Left colon (tissue), 2 donors: ENCODE measurements at regions of chr1 and their contacts with region 1.

Region 1: DNA sequence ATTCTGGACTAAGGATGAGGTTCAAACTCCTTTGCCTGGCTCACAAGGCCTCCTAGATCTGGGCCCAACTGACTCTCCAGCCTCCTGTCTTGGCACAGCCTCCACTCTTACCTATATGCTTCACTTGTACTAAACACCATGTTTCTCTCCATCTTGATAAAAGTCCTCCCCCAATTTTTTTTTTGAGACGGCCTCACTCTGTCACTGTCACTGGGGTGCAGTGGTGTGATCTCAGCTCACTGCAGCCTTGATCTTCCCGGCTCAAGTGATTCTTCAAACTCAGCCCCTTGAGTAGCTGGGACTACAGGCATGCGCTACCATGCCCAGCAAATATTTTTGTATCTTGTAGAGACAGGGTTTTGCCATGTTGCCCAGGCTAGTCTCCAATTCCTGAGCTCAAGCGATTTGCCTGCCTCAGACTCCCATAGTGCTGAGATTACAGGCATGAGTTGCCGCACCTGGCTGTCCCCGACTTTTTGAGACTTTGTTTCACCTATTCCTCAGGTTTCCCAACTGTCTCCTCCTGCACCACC is 39.7 kb downstream of the CD34 start:
- DNase-seq: no peak
- ATAC-seq: no peak

Region 2: DNA sequence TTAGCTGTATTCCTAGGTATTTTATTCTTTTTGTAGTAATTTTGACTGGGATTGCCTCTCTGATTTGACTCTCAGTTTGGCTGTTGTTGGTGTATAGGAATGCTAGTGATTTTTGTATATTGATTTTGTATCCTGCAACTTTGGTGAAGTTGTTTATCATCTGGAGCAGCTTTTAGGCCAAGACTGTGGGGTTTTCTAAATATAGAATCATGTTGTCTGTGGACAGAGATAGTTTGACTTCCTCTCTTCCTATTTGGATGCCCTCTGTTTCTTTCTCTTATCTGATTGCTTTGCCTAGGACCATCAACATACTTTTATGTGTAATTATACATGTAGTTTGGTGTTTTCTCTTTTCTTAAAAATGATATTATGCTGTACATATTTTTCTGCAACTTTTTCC is 92.2 kb before region 1 on chr1:
- intact Hi-C with region 1: no loop called
- DNase-seq: no peak
- ATAC-seq: no peak

Region 3: DNA sequence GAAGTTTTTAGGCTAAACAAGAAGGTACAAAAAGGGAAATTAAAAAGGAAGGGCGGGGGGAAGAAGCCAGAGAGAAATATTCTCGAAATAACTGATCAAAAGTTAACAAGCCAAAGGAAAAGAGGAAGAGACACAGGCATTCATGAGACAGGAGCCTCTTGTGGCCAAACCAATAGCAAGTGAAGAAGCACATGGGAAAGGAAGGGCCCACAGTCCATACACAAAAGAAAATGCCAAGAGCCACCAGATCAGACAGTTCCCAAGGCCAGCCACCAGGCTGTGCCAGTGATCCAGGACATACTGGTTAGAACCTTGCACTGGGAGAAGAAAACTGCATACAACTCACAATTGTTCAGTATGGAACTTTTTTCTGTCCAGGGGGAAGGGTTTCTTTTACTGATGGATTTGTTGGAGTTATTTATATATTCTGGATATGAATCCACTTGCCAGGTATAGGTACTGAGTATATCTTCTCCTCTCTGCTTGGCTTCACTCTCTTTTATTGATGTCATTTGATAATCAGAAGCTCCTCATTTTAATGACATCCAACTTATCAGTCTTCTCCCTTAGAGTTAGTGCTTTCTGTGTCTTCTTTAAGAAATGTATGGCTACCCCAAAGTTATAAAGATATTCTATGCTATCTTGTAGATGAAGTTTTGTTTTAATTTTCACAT is 42.6 kb before region 1 on chr1:
- intact Hi-C with region 1: loop called in 1 of 2 experiments (anchors 2 kb)
- DNase-seq: peak; percentile 79 to 80
- ATAC-seq: peak; percentile 61